Lower leg skin (tissue), 4 donors: ENCODE measurements at regions of chr16 and their contacts with region 1.

Region 1: DNA sequence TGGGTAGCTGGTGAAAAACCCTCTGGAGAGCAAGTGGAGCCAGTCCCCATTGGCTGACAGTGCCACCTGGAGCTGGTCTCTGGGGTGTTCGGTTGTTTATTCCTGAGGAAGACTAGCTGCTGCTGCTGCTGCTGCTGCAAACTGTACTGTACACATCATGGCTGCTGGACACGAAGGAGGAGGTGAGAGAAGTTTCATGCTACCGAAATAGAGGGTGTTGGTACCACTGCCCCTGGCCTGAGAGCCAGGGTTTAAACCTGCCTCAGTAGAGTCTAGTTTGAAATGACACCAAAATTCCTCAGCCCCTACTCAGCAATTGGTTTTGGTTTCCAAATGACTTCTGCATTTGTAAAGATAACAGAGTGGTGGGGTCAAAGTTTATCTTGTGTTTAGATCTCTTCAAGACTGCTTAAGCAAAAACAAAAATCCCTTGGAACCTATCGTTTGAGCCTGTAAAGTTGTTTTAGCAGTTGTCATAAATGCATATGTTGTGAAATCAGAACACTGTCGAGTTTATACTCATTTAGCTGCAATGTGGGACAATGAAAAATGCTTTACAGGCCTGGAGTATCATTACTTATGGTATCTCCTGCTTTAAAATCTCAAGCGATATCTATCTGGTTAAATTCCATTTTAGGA is 40.8 kb downstream of the CYB5B start:
- DNase-seq: peak in 1 of 2 donors; percentile 39
- H3K4me3 ChIP-seq: no peak overlapping the region
- CTCF ChIP-seq: no peak
- POLR2A ChIP-seq: no peak

Region 2: GRCh38 chr16:69396187-69397061 is 68.8 kb before region 1 on chr16:
- intact Hi-C with region 1: loop called (anchors 10 kb)
- DNase-seq: peak; percentile 76 to 92
- H3K4me3 ChIP-seq: no peak overlapping the region
- CTCF ChIP-seq: peak in 1 of 3 donors; percentile 43
- POLR2A ChIP-seq: no peak

Region 3: GRCh38 chr16:69554495-69554894 is 89.3 kb after region 1 on chr16:
- intact Hi-C with region 1: loop called (anchors 10 kb)
- DNase-seq: no peak
- H3K4me3 ChIP-seq: no peak overlapping the region
- CTCF ChIP-seq: no peak
- POLR2A ChIP-seq: no peak